Activated B cell treated with CpG ODN at 0.5 μM for 24 hours (primary cell): ENCODE measurements at regions of chr2 and their contacts with region 1.

Region 1: DNA sequence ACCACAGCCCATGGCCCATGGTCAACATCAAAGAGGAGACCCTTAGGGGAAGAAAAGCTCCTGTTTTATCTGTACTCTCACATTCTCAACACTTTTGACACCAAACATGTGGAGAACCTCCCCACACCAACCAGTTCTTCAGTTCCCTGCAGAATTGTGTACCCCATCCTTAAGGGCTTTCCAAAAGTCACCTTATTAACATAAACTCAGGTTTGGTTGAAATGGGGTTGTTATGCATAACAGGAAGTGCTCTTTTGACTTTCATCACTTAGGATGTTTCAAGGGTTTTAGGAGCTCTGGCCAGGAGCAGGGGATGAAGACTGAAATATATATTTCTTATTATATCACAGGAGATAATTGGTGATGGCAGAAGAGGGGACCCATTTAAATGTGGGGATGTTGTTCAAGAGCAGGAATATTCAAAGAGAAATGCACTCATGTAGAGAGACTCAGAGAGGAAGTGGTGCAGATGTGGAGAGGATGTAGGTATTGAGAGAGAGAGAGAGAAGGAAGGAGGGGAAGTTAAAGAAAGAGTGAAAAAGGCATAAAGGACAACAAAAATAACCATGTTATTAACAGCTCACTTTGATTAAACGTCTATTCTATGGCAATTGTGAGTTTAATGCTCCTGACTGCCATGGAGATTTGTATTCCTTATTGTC is 35.2 kb downstream of the SP140L start:
- DNase-seq: no peak
- ATAC-seq: peak; percentile 62
- H3K4me3 Mint-ChIP-seq: peak overlapping the region; percentile 33
- H3K27ac Mint-ChIP-seq: peak overlapping the region; percentile 80
- H3K4me1 Mint-ChIP-seq: peaks cover 53% of the 10 kb centered on the region
- H3K27me3 Mint-ChIP-seq: no peaks in the 10 kb centered on the region
- CTCF ChIP-seq: no peak

Region 2: GRCh38 chr2:230347659-230348305 is 14.4 kb before region 1 on chr2:
- CTCF ChIA-PET with region 1: no interaction called
- POLR2A ChIA-PET with region 1: interaction called, 3 read pairs
- intact Hi-C with region 1: loop called (anchors 2 kb)
- DNase-seq: no peak
- ATAC-seq: peak; percentile 74
- H3K4me3 Mint-ChIP-seq: peak overlapping the region; percentile 28
- H3K27ac Mint-ChIP-seq: peak overlapping the region; percentile 81
- H3K4me1 Mint-ChIP-seq: peaks cover 54% of the 10 kb centered on the region
- H3K27me3 Mint-ChIP-seq: no peaks in the 10 kb centered on the region
- CTCF ChIP-seq: no peak